IMR-90 (cell line): ENCODE measurements at regions of chr11 and their contacts with region 1.

Region 1: GRCh38 chr11:119474682-119475596 is 52.0 kb upstream of the THY1 start:
- DNase-seq: peak; percentile 82
- ATAC-seq: peak; percentile 81
- H3K4me3 ChIP-seq: no peak overlapping the region
- H3K27ac ChIP-seq: peak overlapping the region; percentile 24; the same call in 1 of the 2 replicates
- H3K4me1 ChIP-seq: peaks cover 17% of the 10 kb centered on the region
- H3K27me3 ChIP-seq: peaks cover 12% of the 10 kb centered on the region; the same call in 1 of the 2 replicates
- CTCF ChIP-seq: peak; percentile 96
- POLR2A ChIP-seq: peak; percentile 51; the same call in 1 of the 2 replicates
- RAD21 ChIP-seq: peak; percentile 99

Region 2: GRCh38 chr11:119101759-119102423 is 373.0 kb before region 1 on chr11 and contains the start of gene DPAGT1:
- CTCF ChIA-PET with region 1: no interaction called
- POLR2A ChIA-PET with region 1: no interaction called
- dilution Hi-C with region 1: no loop called
- in situ Hi-C with region 1: no loop called
- intact Hi-C with region 1: loop called (anchors 10 kb)
- DNase-seq: peak; percentile 97
- ATAC-seq: peak; percentile 86
- H3K4me3 ChIP-seq: peak within 1 kb of the TSS; percentile 72
- H3K27ac ChIP-seq: peak within 1 kb of the TSS; percentile 80
- H3K4me1 ChIP-seq: peaks cover 8% of the 10 kb centered on the region
- H3K27me3 ChIP-seq: no peaks in the 10 kb centered on the region
- CTCF ChIP-seq: no peak
- POLR2A ChIP-seq: peak; percentile 41; the same call in 1 of the 2 replicates
- RAD21 ChIP-seq: no peak
- total RNA-seq, gene DPAGT1: 13.6 and 15.2 TPM in 2 replicates

Region 3: GRCh38 chr11:119236490-119236889 is 238.4 kb before region 1 on chr11:
- CTCF ChIA-PET with region 1: no interaction called
- POLR2A ChIA-PET with region 1: interaction called, 13 read pairs
- dilution Hi-C with region 1: no loop called
- in situ Hi-C with region 1: no loop called
- intact Hi-C with region 1: no loop called
- DNase-seq: peak; percentile 72
- ATAC-seq: peak; percentile 71
- H3K4me3 ChIP-seq: no peak overlapping the region
- H3K27ac ChIP-seq: no peak overlapping the region; the same call in 1 of the 2 replicates
- H3K4me1 ChIP-seq: peaks cover 5% of the 10 kb centered on the region
- H3K27me3 ChIP-seq: no peaks in the 10 kb centered on the region
- CTCF ChIP-seq: no peak
- POLR2A ChIP-seq: no peak
- RAD21 ChIP-seq: no peak

Region 4: GRCh38 chr11:119249671-119250010 is 225.3 kb before region 1 on chr11:
- CTCF ChIA-PET with region 1: no interaction called
- POLR2A ChIA-PET with region 1: no interaction called
- dilution Hi-C with region 1: no loop called
- in situ Hi-C with region 1: no loop called
- intact Hi-C with region 1: no loop called
- DNase-seq: peak; percentile 17
- ATAC-seq: no peak
- H3K4me3 ChIP-seq: no peak overlapping the region
- H3K27ac ChIP-seq: no peak overlapping the region
- H3K4me1 ChIP-seq: peaks cover 5% of the 10 kb centered on the region; the same call in 1 of the 2 replicates
- H3K27me3 ChIP-seq: no peaks in the 10 kb centered on the region
- CTCF ChIP-seq: no peak
- POLR2A ChIP-seq: no peak
- RAD21 ChIP-seq: no peak

Region 5: GRCh38 chr11:119363851-119364590 is 110.9 kb before region 1 on chr11:
- CTCF ChIA-PET with region 1: interaction called, 11 read pairs
- POLR2A ChIA-PET with region 1: no interaction called
- dilution Hi-C with region 1: no loop called
- in situ Hi-C with region 1: loop called (anchors 5 kb)
- intact Hi-C with region 1: no loop called
- DNase-seq: no peak
- ATAC-seq: peak; percentile 76
- H3K4me3 ChIP-seq: peak overlapping the region; percentile 38
- H3K27ac ChIP-seq: no peak overlapping the region
- H3K4me1 ChIP-seq: peaks cover 34% of the 10 kb centered on the region
- H3K27me3 ChIP-seq: no peaks in the 10 kb centered on the region
- CTCF ChIP-seq: no peak
- POLR2A ChIP-seq: no peak
- RAD21 ChIP-seq: no peak

Region 6: DNA sequence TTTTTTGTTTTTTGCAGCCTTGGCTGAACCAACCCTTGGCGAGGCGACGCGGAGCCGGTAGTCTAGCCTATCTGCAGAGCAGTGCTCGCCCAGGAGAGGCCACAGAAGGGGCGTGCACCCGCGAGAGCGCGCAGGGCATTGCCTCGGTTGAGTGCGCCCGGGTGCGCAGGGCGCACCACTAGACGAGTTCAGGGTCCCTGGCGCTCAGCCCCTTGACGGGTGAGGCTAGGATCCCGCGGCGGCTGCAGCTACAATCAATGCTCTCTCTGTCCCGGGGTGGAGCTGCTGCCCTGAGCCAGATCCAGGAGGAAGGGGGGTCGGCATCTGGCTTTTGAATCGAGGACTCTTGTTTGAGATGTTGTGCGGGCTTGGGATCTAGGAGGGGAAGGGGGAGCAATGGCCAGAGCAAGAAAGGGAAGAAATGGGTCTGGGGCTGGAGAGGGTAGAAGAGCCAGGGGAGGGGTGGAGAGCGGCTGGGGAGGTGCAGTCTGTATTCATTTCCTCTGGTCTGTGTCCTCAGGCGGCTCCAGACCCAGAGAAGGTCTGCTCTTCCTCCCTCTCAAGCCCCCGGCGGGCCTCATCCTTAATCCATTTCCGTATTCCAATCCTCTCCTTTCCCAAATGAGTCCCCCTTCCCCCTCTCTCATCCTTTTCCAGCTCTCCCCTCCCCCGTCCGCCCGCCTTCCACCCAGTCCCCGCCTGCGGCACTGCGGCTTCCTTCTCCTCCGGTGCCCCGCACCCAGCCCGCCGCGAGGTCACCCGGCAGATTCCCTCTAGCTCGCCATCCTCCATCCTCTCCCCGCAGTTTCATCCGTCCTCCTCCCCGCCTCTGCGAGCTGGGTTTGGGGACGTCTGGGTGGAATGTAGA is 52.8 kb before region 1 on chr11:
- CTCF ChIA-PET with region 1: interaction called, 10 read pairs
- POLR2A ChIA-PET with region 1: interaction called, 6 read pairs
- dilution Hi-C with region 1: no loop called
- in situ Hi-C with region 1: no loop called
- intact Hi-C with region 1: loop called (anchors 1 kb)
- DNase-seq: peak; percentile 34
- ATAC-seq: peak; percentile 45
- H3K4me3 ChIP-seq: peak overlapping the region; percentile 77
- H3K27ac ChIP-seq: peak overlapping the region; percentile 83
- H3K4me1 ChIP-seq: peaks cover 20% of the 10 kb centered on the region
- H3K27me3 ChIP-seq: no peaks in the 10 kb centered on the region
- CTCF ChIP-seq: no peak
- POLR2A ChIP-seq: no peak; the same call in 1 of the 2 replicates
- RAD21 ChIP-seq: no peak

Region 7: DNA sequence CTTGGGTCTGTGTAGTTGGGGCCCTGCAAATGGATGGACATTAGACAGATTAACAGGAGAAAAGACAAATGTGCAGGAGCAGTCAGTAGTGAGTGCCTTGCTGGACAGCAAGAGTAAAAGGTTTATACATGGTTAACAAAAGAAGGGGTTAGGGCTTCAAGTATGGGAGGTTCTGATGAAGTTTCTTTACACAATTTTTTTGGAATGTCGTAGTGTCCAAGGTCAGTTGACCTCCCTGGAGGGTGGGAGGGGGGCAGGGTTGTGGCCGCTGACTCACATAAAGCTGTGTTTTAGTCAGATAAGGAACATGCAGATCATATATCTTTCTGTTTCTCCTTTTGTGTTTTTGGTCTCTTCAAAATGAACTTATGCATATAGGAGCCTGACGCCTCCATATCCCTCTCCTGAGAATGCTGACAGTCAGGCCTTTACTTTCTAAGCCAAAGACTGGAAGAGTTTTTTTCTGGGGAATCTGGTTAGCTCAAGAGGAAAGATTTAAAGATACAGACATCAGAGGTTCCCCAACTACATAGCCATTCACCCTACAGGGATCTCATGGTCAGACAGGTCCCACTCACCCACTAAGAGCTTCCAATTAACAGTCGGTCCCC is 119.8 kb after region 1 on chr11:
- CTCF ChIA-PET with region 1: no interaction called
- POLR2A ChIA-PET with region 1: no interaction called
- dilution Hi-C with region 1: no loop called
- in situ Hi-C with region 1: no loop called
- intact Hi-C with region 1: no loop called
- DNase-seq: peak; percentile 87
- ATAC-seq: peak; percentile 86
- H3K4me3 ChIP-seq: no peak overlapping the region
- H3K27ac ChIP-seq: peak overlapping the region; percentile 78
- H3K4me1 ChIP-seq: peaks cover 10% of the 10 kb centered on the region
- H3K27me3 ChIP-seq: no peaks in the 10 kb centered on the region; the same call in 1 of the 2 replicates
- CTCF ChIP-seq: no peak
- POLR2A ChIP-seq: no peak
- RAD21 ChIP-seq: 0 out of 2 replicates have a peak, but pooled peaks have one; percentile 3